Natural killer cell (primary cell): ENCODE measurements at regions of chr10 and their contacts with region 1.

Region 1: GRCh38 chr10:71727738-71728737 is 8.5 kb upstream of the C10orf105 start:
- DNase-seq: peak; percentile 53 to 91
- ATAC-seq: peak; percentile 53 to 80 (median 68)
- H3K4me3 ChIP-seq: peak overlapping the region; percentile 0
- H3K4me3 Mint-ChIP-seq: peak overlapping the region; percentile 81
- H3K27ac ChIP-seq: peak overlapping the region; percentile 91
- H3K27ac Mint-ChIP-seq: peak overlapping the region; percentile 90
- H3K4me1 ChIP-seq: peaks cover 93% of the 10 kb centered on the region
- H3K4me1 Mint-ChIP-seq: peaks cover 52 to 71% of the 10 kb centered on the region in 2 donors
- H3K27me3 ChIP-seq: no peaks in the 10 kb centered on the region
- H3K27me3 Mint-ChIP-seq: no peaks in the 10 kb centered on the region
- CTCF ChIP-seq: no peak

Region 2: DNA sequence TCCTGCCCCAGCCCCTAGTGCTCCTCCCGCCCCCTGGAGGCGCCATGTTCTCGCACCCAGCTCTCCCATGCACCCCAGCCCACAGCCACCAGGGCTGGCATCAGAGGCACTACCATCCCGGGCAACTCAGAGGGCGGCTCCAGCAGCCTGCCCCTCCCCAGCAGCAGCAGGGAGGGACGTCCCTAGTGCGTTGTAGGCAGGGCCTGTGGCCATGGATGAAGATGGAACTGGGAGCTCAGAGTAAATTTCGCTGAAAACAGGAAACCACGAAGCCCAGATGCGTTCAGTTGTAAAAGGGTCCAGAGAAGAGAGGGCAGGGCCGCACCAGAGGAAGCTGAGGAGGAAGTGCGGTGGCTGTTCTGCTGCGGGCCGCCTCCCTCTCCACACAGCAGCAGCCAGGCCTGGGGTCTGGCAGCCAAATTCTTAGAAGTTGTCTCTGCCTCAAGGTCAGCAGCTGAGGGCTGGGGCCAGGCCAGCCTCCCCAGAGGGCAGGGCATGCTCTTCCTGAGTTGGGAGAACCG is 20.7 kb after region 1 on chr10:
- intact Hi-C with region 1: loop called (anchors 2 kb)
- DNase-seq: peak; percentile 52 to 90
- ATAC-seq: peak; percentile 75 to 88 (median 80)
- H3K4me3 ChIP-seq: no peak overlapping the region
- H3K4me3 Mint-ChIP-seq: peak overlapping the region; percentile 84
- H3K27ac ChIP-seq: peak overlapping the region; percentile 81
- H3K27ac Mint-ChIP-seq: peak overlapping the region; percentile 96
- H3K4me1 ChIP-seq: peaks cover 99% of the 10 kb centered on the region
- H3K4me1 Mint-ChIP-seq: peaks cover 87 to 95% of the 10 kb centered on the region in 2 donors
- H3K27me3 ChIP-seq: no peaks in the 10 kb centered on the region
- H3K27me3 Mint-ChIP-seq: no peaks in the 10 kb centered on the region
- CTCF ChIP-seq: no peak